PC-9 (cell line): ENCODE measurements at regions of chr6 and their contacts with region 1.

Region 1: DNA sequence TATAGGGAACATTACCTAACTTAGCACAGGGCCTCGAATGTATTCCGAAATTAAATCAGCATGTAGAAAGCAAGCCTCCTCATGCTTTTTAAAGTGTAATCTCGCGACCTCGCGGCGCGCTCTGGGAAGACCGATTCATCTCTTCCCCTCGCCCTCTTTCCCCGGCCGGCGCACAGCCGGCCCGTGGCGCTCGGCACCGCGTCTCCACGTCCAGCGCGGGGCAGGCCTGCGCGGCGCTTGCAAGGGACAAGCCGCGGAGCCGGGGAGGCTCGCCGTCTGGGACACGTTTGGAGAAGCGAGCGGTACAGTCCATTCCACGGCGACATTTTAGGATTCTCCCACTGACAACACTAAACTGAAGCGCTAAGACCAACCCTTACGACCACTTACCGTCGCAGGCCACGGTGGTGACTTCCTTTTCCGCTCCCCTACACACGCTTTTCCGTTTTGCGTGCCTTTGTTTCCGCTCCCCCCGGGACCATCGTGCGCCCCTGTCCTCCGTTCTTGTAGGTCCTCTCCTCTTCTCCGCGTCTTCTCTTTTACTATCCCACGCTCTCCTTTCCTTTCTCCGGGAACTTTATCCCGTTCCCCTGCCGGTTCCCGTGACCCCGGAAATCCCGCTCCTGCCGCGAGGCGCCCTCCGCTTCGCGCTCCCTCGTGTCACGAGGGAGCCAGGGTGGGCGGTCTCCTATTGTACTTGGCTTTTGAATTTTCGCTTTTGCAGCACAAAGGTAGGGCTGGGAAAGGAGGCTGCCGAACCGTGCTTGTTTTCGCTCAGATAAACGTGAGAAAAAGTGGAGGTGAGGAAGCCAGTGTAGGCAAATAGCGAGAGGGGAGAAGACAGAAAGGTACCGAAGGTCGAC is at the start of gene ECHDC1:
- DNase-seq: peak; percentile 49 to 55
- H3K4me3 ChIP-seq: peak within 1 kb of the TSS; percentile 90
- H3K27ac ChIP-seq: peak within 1 kb of the TSS; percentile 77
- H3K4me1 ChIP-seq: peaks cover 82% of the 10 kb centered on the region
- H3K27me3 ChIP-seq: no peaks in the 10 kb centered on the region
- CTCF ChIP-seq: no peak
- total RNA-seq, gene ECHDC1: 50.4 and 51.4 TPM in 2 replicates

Region 2: GRCh38 chr6:127201321-127201720 is 141.9 kb before region 1 on chr6:
- CTCF ChIA-PET with region 1: no interaction called
- POLR2A ChIA-PET with region 1: no interaction called
- intact Hi-C with region 1: no loop called
- DNase-seq: no peak
- H3K4me3 ChIP-seq: no peak overlapping the region
- H3K27ac ChIP-seq: no peak overlapping the region
- H3K4me1 ChIP-seq: no peaks in the 10 kb centered on the region
- H3K27me3 ChIP-seq: no peaks in the 10 kb centered on the region
- CTCF ChIP-seq: no peak

Region 3: DNA sequence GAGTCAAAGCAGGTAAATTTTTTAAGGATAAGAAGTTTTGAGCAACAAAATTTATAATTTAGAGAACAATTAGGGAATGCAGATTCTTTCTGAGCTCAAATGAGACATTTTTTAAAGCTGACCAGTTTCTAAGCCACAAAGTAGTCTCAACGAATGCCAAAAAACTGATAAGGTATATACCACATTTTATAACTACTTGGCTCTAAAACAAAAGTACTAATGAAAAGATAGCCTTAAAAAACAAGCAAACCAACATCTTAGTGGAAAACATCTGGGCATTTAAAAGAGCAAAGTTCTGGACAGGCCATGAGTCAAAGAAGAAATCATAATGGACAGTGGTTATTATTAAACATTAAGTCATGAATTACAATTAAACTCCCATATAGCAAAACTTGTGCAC is 99.7 kb before region 1 on chr6:
- CTCF ChIA-PET with region 1: no interaction called
- POLR2A ChIA-PET with region 1: interaction called, 14 read pairs
- intact Hi-C with region 1: no loop called
- DNase-seq: no peak
- H3K4me3 ChIP-seq: no peak overlapping the region
- H3K27ac ChIP-seq: no peak overlapping the region
- H3K4me1 ChIP-seq: no peaks in the 10 kb centered on the region
- H3K27me3 ChIP-seq: no peaks in the 10 kb centered on the region
- CTCF ChIP-seq: no peak

Region 4: DNA sequence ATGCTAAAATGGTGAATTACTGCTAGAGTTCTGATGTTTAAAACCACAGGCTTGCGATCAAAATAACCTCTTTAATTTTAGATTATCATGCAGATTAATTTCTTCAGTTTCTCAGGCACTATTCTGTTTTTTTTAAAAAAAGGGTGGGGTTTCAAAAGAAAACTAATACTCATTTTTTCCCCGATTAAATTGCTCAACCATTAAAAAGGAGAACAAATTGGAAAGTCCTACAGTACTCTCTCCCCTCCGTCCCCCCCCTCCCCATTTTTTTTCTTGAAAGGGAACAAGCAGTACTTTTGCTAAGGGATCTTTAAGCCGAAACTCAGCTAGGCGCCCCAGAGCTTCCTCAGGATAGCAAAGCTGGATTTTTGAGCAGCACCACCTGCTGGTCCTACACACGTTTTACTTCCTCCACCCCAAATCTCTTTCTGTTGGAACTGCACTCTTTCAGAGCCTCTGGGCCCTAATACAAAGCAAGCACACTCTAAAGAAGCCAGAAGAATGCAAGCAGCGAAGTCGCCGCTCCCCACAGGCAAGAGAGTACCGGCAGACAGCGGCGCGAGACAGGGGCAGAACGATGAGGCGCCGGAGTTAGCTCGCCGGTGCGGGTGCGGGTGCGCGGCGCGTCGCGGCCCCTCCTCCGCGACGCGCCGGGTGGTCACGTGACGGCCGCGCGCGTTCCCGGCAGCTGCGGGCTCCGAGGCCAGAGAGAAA is 76.8 kb before region 1 on chr6 and contains the start of gene RNF146:
- CTCF ChIA-PET with region 1: no interaction called
- POLR2A ChIA-PET with region 1: no interaction called
- intact Hi-C with region 1: loop called (anchors 1 kb)
- DNase-seq: peak; percentile 76 to 77
- H3K4me3 ChIP-seq: peak within 1 kb of the TSS; percentile 65
- H3K27ac ChIP-seq: peak within 1 kb of the TSS; percentile 85
- H3K4me1 ChIP-seq: peaks cover 30% of the 10 kb centered on the region
- H3K27me3 ChIP-seq: no peaks in the 10 kb centered on the region
- CTCF ChIP-seq: peak; percentile 92
- total RNA-seq, gene RNF146: 26.0 and 28.6 TPM in 2 replicates

Region 5: DNA sequence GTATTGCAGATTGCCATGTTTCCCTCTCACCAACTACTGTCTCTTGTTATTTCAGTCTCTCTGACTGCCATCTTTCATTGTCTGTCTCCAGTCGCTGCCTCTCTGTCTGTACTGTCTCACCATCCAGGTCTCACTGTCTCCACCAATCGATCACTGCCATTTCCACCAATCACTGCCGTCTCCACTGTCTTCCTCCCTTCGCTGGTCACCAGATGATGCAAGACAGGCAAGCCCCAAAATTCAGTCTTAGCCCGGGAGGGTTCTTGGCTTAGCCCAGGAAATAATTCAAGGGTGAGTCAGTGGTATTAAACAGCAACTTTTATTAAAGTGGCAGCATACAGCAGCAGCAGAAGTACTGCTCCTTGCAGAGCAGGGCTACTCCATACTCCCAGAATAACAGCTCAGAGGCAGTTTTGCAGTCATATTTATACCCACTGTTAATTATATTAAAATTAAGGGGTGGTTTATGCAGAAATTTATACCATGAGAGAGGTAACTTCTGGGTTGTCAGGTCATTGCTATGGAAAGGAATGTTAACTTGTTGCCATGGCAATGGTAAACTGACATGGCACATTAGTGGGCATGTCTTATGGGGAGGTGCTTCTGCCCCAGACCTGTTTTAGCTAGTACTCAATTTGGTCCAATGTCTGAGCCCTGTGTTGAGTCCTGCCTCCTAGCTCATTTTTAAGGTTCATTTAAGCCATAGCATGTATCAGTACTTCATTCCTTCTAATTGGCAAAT is 23.3 kb after region 1 on chr6:
- CTCF ChIA-PET with region 1: no interaction called
- POLR2A ChIA-PET with region 1: no interaction called
- intact Hi-C with region 1: loop called (anchors 1 kb)
- DNase-seq: peak; percentile 74 to 93
- H3K4me3 ChIP-seq: peak overlapping the region; percentile 6; the same call in 1 of the 2 replicates
- H3K27ac ChIP-seq: peak overlapping the region; percentile 67
- H3K4me1 ChIP-seq: peaks cover 22% of the 10 kb centered on the region
- H3K27me3 ChIP-seq: no peaks in the 10 kb centered on the region
- CTCF ChIP-seq: no peak